Breast epithelium (tissue), 4 donors: ENCODE measurements at regions of chr7 and their contacts with region 1.

Region 1: DNA sequence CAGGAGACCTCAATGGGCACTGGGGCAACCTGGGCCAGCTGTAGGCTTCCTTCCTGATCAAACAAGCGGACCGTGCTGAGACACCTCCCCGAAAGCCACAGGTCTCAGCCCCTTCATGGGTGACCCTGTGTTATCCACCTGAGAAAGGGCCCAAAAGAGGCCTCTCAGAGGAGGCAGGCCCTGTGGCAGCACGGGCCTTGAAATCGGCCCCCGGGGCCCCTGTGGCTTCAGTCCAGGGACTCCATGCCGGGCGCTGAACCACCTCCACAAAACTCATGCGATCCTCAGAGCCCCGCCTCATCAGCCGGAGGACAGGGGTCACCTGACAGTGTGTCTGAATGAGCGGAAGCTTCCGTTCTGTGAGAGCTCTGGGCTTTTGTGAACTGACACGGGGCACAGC is 307.1 kb downstream of the PAXIP1 start:
- DNase-seq: no peak
- H3K4me3 ChIP-seq: no peak overlapping the region
- H3K27ac ChIP-seq: no peak overlapping the region
- H3K4me1 ChIP-seq: no peaks in the 10 kb centered on the region
- H3K27me3 ChIP-seq: no peaks in the 10 kb centered on the region
- CTCF ChIP-seq: no peak
- POLR2A ChIP-seq: no peak

Region 2: GRCh38 chr7:154709840-154710520 is 14.1 kb after region 1 on chr7:
- intact Hi-C with region 1: loop called (anchors 1 kb)
- DNase-seq: no peak
- H3K4me3 ChIP-seq: no peak overlapping the region
- H3K27ac ChIP-seq: no peak overlapping the region
- H3K4me1 ChIP-seq: no peaks in the 10 kb centered on the region
- H3K27me3 ChIP-seq: no peaks in the 10 kb centered on the region
- CTCF ChIP-seq: no peak
- POLR2A ChIP-seq: no peak